Right cardiac atrium (tissue), 5 donors: ENCODE measurements at regions of chr21 and their contacts with region 1.

Region 1: DNA sequence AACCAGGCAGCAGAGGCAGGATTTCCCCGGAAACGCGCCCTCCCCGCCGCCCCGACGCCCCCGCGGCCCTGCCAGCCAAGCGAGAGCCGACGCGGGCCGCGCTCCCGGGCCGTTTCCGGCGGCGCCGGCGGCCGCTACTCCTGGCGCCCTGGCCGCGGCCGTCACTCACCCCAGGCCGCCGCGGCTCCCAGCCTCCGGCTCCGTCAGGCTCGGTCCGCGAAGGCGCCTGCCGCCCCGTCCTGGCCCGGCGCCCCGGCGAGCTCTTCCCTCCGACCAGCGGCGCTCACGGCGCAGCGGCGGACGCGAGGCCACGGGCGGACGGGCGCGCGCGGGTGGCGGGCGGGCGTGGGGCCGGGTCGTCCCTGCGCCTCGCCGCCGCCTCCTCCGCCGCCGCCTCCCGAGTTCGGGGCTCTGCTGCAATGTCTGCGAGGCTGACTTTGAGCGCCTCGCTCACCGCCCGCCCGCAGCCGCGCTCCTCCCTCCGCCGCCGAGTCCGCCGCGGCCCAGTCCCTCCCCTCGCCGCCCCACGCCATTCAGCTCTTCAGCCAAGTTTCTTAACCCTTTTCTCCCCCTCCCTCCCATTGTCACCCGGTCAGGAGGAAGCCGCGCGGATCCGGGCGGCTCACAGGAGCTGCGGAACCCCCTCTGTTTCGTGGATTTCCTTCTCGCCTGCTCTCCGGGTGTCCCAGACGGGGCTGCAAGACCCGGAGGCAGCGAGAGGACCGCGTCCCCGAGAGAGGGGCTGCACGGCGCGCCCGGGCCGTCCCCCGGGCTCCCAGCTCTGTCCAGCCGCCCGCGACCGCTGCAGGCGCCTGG is at the start of gene NRIP1:
- DNase-seq: peak; percentile 94 to 97 (median 96)
- ATAC-seq: peak; percentile 96
- H3K4me3 ChIP-seq: peak within 1 kb of the TSS; percentile 90
- H3K27ac ChIP-seq: peak within 1 kb of the TSS; percentile 98
- H3K4me1 ChIP-seq: no peaks in the 10 kb centered on the region
- H3K27me3 ChIP-seq: no peaks in the 10 kb centered on the region
- total RNA-seq, gene NRIP1: 19.7 to 33.4 (median 21.9) TPM

Region 2: DNA sequence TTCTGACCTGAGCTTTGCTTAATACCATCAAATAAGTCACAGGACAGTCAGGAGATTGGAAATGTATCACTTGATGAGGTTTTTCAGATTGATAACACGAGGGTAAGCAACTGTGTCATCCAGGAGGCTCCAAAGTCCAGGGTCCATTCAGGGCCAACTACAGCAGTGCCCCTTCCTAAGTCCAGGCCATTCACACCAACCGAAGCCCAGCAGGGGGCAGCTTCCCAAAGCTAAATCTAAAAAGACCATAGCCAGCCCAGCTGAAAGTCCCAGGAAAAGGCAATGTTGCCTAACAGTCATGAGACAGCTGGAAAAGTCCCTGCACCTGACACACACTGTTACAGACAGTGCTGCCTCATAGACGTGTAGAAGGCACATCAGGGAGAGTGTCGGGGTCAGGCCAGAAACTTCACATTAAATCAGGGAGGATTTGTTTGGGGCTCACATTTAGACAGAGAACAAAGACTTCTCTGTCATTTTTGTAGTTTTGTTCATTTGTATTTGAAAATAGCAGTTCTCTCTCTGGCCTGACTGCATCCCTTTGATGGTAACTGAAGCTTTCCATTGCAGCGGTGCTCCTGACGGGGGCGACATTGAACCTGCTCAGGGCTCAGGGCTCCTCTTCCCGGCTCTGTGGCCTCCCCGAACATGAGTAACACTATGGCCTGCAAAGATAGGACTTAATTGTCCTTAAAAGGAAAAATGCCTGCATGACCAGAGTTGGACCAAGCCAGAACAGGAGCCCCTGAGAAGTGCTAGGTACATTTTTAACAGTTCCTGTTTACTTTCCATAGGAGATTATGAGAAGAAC is 200.4 kb before region 1 on chr21:
- intact Hi-C with region 1: loop called in 2 of 4 experiments (anchors 10 kb)
- DNase-seq: peak; percentile 69 to 88 (median 84)
- ATAC-seq: peak; percentile 88 to 92
- H3K4me3 ChIP-seq: no peak overlapping the region
- H3K27ac ChIP-seq: no peak overlapping the region
- H3K4me1 ChIP-seq: no peaks in the 10 kb centered on the region
- H3K27me3 ChIP-seq: no peaks in the 10 kb centered on the region

Region 3: GRCh38 chr21:14942801-14943490 is 121.8 kb before region 1 on chr21:
- intact Hi-C with region 1: no loop called
- DNase-seq: no peak
- ATAC-seq: peak in 1 of 2 donors; percentile 68
- H3K4me3 ChIP-seq: no peak overlapping the region
- H3K27ac ChIP-seq: no peak overlapping the region
- H3K4me1 ChIP-seq: peaks cover 2% of the 10 kb centered on the region
- H3K27me3 ChIP-seq: no peaks in the 10 kb centered on the region

Region 4: GRCh38 chr21:15121655-15122120 is 56.9 kb after region 1 on chr21:
- intact Hi-C with region 1: loop called in 1 of 4 experiments (anchors 5 kb)
- DNase-seq: peak; percentile 49 to 71 (median 55)
- ATAC-seq: peak; percentile 94 to 95
- H3K4me3 ChIP-seq: no peak overlapping the region
- H3K27ac ChIP-seq: peak overlapping the region; percentile 91
- H3K4me1 ChIP-seq: peaks cover 5% of the 10 kb centered on the region
- H3K27me3 ChIP-seq: no peaks in the 10 kb centered on the region

Region 5: GRCh38 chr21:15206514-15206913 is 141.7 kb after region 1 on chr21:
- intact Hi-C with region 1: loop called in 1 of 4 experiments (anchors 10 kb)
- DNase-seq: no peak
- ATAC-seq: no peak
- H3K4me3 ChIP-seq: no peak overlapping the region
- H3K27ac ChIP-seq: no peak overlapping the region
- H3K4me1 ChIP-seq: no peaks in the 10 kb centered on the region
- H3K27me3 ChIP-seq: no peaks in the 10 kb centered on the region

Region 6: GRCh38 chr21:15221799-15222386 is 157.1 kb after region 1 on chr21:
- intact Hi-C with region 1: loop called in 1 of 4 experiments (anchors 10 kb)
- DNase-seq: peak; percentile 46 to 57 (median 51)
- ATAC-seq: peak; percentile 95 to 99
- H3K4me3 ChIP-seq: no peak overlapping the region
- H3K27ac ChIP-seq: no peak overlapping the region
- H3K4me1 ChIP-seq: no peaks in the 10 kb centered on the region
- H3K27me3 ChIP-seq: no peaks in the 10 kb centered on the region

Region 7: DNA sequence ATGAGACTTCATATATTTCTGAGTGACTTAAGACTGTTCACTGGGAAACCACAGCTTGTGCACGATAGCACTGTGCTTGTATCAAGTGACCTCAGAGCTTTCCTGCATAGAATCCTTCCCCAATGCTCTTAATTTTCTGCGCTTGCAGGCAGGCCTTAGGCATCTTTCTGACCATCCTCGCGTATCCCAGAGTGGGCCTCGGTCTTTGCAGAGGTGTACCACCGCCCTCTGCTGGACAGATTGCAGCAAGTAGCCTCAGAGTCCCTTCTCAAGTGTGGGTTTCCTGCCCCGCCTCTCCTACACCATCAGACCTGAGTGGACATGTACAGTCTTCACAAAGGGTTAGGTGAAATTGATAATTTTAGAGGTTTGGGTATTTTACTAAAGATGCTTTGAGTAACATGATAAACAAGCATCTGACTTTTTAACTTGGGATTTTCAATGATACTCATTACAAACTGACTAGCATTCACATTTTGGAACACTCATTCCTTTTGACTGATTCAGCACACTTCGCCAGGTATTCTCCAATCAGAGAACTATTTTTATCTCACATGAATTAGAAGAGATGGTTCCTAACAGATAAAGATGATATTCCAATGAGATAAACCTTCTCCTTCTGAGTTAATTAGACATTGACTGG is 418.5 kb after region 1 on chr21:
- intact Hi-C with region 1: loop called in 3 of 4 experiments (anchors 5 to 10 kb)
- DNase-seq: peak; percentile 86 to 94 (median 91)
- ATAC-seq: peak; percentile 99
- H3K4me3 ChIP-seq: no peak overlapping the region
- H3K27ac ChIP-seq: no peak overlapping the region
- H3K4me1 ChIP-seq: no peaks in the 10 kb centered on the region
- H3K27me3 ChIP-seq: no peaks in the 10 kb centered on the region